ENCODE measurements at regions of chr2 and their contacts with region 1.

Region 1: GRCh38 chr2:100721693-100722092 is 98.2 kb upstream of the NPAS2 start:
- DNase-seq: no peak
- H3K4me3 ChIP-seq: no peak overlapping the region
- H3K27ac ChIP-seq: no peak overlapping the region
- H3K4me1 ChIP-seq: no peaks in the 10 kb centered on the region
- H3K27me3 ChIP-seq: no peaks in the 10 kb centered on the region
- CTCF ChIP-seq: no peak
- EP300 ChIP-seq: no peak
- POLR2A ChIP-seq: no peak

Region 2: GRCh38 chr2:100427628-100428258 is 293.9 kb before region 1 on chr2:
- in situ Hi-C with region 1: no loop called
- intact Hi-C with region 1: loop called (anchors 5 kb)
- DNase-seq: peak; percentile 71
- H3K4me3 ChIP-seq: no peak overlapping the region
- H3K27ac ChIP-seq: no peak overlapping the region
- H3K4me1 ChIP-seq: no peaks in the 10 kb centered on the region
- H3K27me3 ChIP-seq: no peaks in the 10 kb centered on the region
- CTCF ChIP-seq: peak in 4 of 5 experiments; percentile 33 to 43 (median 38)
- EP300 ChIP-seq: no peak
- POLR2A ChIP-seq: no peak

Region 3: GRCh38 chr2:100610381-100610831 is 111.3 kb before region 1 on chr2:
- in situ Hi-C with region 1: no loop called
- intact Hi-C with region 1: loop called (anchors 10 kb)
- DNase-seq: peak; percentile 54
- H3K4me3 ChIP-seq: no peak overlapping the region
- H3K27ac ChIP-seq: no peak overlapping the region
- H3K4me1 ChIP-seq: no peaks in the 10 kb centered on the region
- H3K27me3 ChIP-seq: no peaks in the 10 kb centered on the region
- CTCF ChIP-seq: peak; percentile 29 to 54 (median 39)
- EP300 ChIP-seq: no peak
- POLR2A ChIP-seq: no peak

Measured in transverse colon (tissue), 4 donors.